Caco-2 (cell line): ENCODE measurements at regions of chr3 and their contacts with region 1.

Region 1: GRCh38 chr3:136617198-136617597 is 135.0 kb downstream of the STAG1 start:
- DNase-seq: peak; percentile 41 to 45
- H3K4me3 ChIP-seq: no peak overlapping the region
- H3K4me3 Mint-ChIP-seq: no peak overlapping the region
- H3K27ac Mint-ChIP-seq: no peak overlapping the region
- H3K4me1 ChIP-seq: peaks cover 12% of the 10 kb centered on the region; the same call in 1 of the 2 replicates
- H3K4me1 Mint-ChIP-seq: peaks cover 16% of the 10 kb centered on the region
- H3K27me3 ChIP-seq: no peaks in the 10 kb centered on the region
- H3K27me3 Mint-ChIP-seq: no peaks in the 10 kb centered on the region
- CTCF ChIP-seq: peak in 1 of 2 experiments; percentile 18

Region 2: GRCh38 chr3:136390574-136390973 is 226.6 kb before region 1 on chr3:
- CTCF ChIA-PET with region 1: interaction called, 6 read pairs
- POLR2A ChIA-PET with region 1: no interaction called
- intact Hi-C with region 1: loop called (anchors 1 kb)
- DNase-seq: no peak
- H3K4me3 ChIP-seq: no peak overlapping the region
- H3K4me3 Mint-ChIP-seq: no peak overlapping the region
- H3K27ac Mint-ChIP-seq: no peak overlapping the region
- H3K4me1 ChIP-seq: no peaks in the 10 kb centered on the region
- H3K4me1 Mint-ChIP-seq: no peaks in the 10 kb centered on the region
- H3K27me3 ChIP-seq: no peaks in the 10 kb centered on the region
- H3K27me3 Mint-ChIP-seq: no peaks in the 10 kb centered on the region
- CTCF ChIP-seq: no peak

Region 3: DNA sequence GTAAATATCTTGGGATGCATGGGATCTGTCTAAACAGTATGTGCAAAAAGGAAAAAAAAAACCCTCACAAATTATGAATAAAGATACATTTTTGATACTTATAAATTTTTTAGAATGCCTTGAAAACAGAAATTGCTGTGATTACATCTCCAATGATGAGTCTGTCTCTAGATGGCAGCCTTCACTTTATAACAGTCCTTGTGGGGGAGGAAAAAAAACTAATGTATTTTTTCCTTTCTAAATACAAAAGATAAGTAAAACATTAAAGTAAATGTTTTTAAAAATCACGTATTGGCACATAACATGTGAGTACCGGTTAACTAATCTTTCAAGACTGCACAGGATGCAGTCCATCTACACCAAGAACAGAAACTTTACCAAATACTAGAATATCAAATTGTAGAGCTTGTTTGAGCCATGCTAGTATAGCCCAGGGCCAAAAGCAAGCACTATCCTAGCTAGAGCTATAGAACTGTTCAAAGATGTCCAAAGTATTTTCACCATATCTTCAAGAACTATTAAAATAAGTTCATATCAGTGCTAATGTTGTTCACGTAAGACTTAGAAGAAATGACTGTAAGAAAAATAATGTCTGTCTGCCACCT is 71.4 kb before region 1 on chr3:
- CTCF ChIA-PET with region 1: interaction called, 4 read pairs
- POLR2A ChIA-PET with region 1: no interaction called
- intact Hi-C with region 1: loop called (anchors 1 kb)
- DNase-seq: no peak
- H3K4me3 ChIP-seq: no peak overlapping the region
- H3K4me3 Mint-ChIP-seq: no peak overlapping the region
- H3K27ac Mint-ChIP-seq: no peak overlapping the region
- H3K4me1 ChIP-seq: 0 out of 2 replicates have a peak, but pooled peaks cover 8% of the 10 kb centered on the region
- H3K4me1 Mint-ChIP-seq: peaks cover 10% of the 10 kb centered on the region
- H3K27me3 ChIP-seq: no peaks in the 10 kb centered on the region
- H3K27me3 Mint-ChIP-seq: no peaks in the 10 kb centered on the region
- CTCF ChIP-seq: peak; percentile 10 to 30